Aorta (tissue), 5 donors: ENCODE measurements at regions of chr5 and their contacts with region 1.

Region 1: DNA sequence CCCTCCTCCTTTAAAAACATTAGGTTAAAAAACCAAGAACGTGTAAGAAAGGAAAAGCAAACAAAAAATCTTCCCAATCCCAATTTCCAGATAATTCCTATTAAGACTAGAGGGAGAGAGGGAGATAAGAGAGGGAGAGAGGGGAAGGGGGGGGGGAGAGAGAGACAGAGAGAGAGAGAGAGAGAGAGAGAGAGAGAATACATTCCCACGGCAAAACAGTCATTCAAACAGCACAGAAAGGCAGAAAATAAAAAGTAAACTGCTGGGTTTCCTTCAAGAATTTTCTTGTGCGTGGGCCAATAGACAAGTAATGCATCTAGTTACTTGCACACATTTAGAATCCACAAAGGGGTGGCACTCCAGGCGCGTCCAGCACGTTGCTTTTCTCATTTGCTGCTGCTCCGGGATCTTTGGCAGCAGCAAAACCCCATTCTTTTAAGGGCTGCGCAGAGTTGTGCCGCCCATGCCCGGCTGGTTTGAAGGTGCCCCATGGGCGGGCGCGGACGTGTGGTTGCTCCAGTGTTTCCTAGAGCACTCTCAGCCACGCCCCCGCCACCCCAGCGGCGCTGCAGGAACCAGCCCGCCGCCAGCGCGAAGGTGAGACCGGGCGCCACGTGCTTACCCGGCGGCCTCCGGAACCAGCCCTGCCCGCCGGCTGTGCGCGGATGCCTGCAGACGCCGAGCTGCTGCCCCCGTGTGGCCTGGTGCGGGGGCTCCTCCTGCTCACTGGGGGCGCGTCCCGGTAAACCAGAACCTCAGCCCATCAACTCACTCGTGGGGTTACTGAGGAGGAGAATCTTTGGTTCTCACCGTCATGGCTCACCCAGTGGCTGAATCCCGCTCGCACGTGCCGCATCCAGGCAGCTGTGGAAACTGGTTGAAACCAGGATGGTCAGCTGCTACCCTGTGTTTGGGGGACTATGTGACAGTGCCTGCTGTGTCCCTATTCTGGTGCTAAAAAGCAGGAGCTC is 44.6 kb downstream of the STC2 start:
- DNase-seq: peak; percentile 78 to 88
- ATAC-seq: peak; percentile 83
- H3K4me3 ChIP-seq: no peak overlapping the region
- H3K27ac ChIP-seq: no peak overlapping the region
- H3K4me1 ChIP-seq: no peaks in the 10 kb centered on the region
- H3K27me3 ChIP-seq: no peaks in the 10 kb centered on the region

Region 2: DNA sequence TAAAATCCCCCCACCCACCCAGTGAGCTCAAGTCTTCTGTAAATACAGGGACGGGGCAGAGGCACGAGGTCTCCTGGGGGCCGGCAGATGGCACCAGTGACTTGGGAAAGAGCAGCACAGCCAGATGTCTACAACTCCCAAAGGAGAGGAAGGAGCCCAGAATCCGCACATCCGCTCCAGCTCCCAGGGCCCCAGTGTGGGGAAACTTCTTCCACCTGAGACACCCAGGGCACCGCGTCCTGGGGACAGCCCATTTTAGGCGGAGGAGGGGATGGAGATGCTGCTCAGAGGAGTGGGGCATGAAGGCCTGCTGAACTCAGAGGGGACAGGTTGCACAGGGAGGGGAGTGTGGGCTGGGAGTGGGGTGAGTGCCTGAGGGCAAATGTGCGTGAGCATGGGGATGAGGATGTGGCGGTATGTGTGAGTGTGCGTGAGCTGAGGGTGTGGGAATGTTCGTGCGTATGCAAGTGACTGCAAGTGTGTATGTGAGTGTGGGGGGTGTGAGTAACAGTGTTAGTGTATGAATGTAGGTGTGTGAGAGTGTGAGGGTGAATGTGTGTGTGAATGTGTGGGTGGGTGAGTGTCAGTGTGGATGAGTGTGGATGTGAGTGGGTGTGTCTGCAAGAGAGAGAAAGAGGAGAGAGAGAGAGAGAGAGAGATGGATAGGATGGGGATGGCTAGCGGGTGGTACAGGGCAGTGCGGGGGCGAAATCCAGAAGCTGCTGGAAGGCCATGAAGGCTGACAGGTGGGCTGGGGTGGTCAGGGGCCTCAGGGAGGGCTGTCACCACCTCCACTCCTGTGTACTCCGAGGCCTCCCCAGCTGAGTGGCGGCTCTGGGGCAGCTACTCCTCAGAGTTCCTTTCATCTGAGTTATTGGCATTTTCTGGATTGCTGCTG is 576.1 kb before region 1 on chr5:
- intact Hi-C with region 1: loop called (anchors 10 kb)
- DNase-seq: peak; percentile 49 to 80
- ATAC-seq: no peak
- H3K4me3 ChIP-seq: no peak overlapping the region
- H3K27ac ChIP-seq: no peak overlapping the region
- H3K4me1 ChIP-seq: no peaks in the 10 kb centered on the region
- H3K27me3 ChIP-seq: no peaks in the 10 kb centered on the region